Ascending aorta (tissue), 2 donors: ENCODE measurements at regions of chr19 and their contacts with region 1.

Region 1: DNA sequence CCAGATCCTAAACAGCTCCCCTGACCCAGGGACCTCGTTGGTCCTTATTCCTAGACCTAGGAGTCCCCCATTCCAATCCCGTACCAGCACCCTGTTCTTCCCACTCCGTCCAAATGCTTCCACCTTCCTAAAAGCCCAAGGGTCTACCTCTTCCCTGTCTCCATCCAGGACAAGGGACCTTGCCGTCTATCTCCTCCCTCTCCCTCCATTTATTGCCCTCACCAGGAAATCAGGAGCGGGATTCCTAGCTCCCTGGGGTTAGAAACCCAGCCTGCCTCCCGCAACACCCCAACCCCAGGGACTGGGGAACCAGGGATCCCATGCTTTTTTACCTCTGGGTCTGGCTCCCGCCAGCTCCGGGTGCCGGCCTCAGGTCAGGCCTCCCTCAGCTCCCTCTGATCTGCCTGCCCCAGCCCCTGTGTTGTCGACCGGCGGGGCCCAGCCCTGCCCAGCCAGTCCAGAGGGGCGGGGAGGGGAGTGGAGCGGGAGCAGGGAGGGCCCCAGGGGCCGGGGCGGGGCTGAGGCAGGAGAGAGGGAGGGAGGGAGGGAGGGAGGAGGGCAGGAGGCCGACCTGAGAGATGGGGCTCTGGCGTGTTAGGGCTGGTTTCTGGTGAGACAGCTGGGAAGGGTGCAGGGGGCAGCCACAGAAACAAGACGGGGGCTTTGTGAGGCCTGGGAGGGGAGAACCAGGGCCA is at the start of gene B3GNT8:
- DNase-seq: peak; percentile 36 to 91
- H3K4me3 ChIP-seq: peak within 1 kb of the TSS; percentile 48 to 80
- H3K27ac ChIP-seq: peak within 1 kb of the TSS; percentile 79 to 89
- H3K4me1 ChIP-seq: peaks cover 9 to 21% of the 10 kb centered on the region in 2 donors
- H3K27me3 ChIP-seq: no peaks in the 10 kb centered on the region
- CTCF ChIP-seq: no peak
- total RNA-seq, gene B3GNT8: 3.7 TPM

Region 2: GRCh38 chr19:41321600-41322270 is 105.4 kb before region 1 on chr19:
- intact Hi-C with region 1: loop called (anchors 5 kb)
- DNase-seq: no peak
- H3K4me3 ChIP-seq: no peak overlapping the region
- H3K27ac ChIP-seq: peak overlapping the region; percentile 85 to 97
- H3K4me1 ChIP-seq: peaks cover 35 to 52% of the 10 kb centered on the region in 2 donors
- H3K27me3 ChIP-seq: no peaks in the 10 kb centered on the region
- CTCF ChIP-seq: peak; percentile 61 to 70 (median 68)

Region 3: GRCh38 chr19:41439441-41440222 is 12.5 kb after region 1 on chr19 and contains the start of gene DMAC2:
- intact Hi-C with region 1: loop called (anchors 1 kb)
- DNase-seq: peak; percentile 90 to 99
- H3K4me3 ChIP-seq: peak within 1 kb of the TSS; percentile 66 to 78
- H3K27ac ChIP-seq: peak within 1 kb of the TSS; percentile 90 to 92
- H3K4me1 ChIP-seq: no peaks in the 10 kb centered on the region
- H3K27me3 ChIP-seq: no peaks in the 10 kb centered on the region
- CTCF ChIP-seq: peak in 2 of 3 experiments; percentile 51 to 61
- total RNA-seq, gene DMAC2: 21.2 TPM

Region 4: GRCh38 chr19:41449865-41450178 is 22.7 kb after region 1 on chr19:
- intact Hi-C with region 1: no loop called
- DNase-seq: no peak
- H3K4me3 ChIP-seq: no peak overlapping the region
- H3K27ac ChIP-seq: no peak overlapping the region
- H3K4me1 ChIP-seq: peaks cover 0 to 2% of the 10 kb centered on the region in 2 donors
- H3K27me3 ChIP-seq: no peaks in the 10 kb centered on the region
- CTCF ChIP-seq: no peak

Region 5: GRCh38 chr19:41671491-41671890 is 244.4 kb after region 1 on chr19:
- intact Hi-C with region 1: no loop called
- DNase-seq: no peak
- H3K4me3 ChIP-seq: no peak overlapping the region
- H3K27ac ChIP-seq: no peak overlapping the region
- H3K4me1 ChIP-seq: no peaks in the 10 kb centered on the region
- H3K27me3 ChIP-seq: no peaks in the 10 kb centered on the region
- CTCF ChIP-seq: no peak

Region 6: DNA sequence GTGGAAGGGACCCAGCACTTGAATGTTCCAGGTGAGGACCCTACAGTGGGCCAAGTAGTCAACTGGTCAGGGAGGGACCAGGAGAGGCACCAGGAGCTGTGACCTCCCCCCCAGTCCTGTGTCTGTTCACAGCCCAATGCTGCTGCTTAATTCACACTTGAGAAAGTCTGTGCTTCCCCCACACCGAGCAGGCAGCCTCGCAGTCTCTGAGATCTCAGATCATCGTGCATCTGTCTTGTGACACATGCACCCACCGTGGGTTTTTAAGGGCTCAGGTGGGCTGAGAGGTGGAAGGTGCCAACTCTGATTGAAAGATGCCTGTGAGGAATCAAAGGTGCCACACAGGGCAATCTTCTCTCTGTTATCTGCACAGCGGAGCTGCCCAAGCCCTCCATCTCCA is 287.5 kb after region 1 on chr19:
- intact Hi-C with region 1: no loop called
- DNase-seq: no peak
- H3K4me3 ChIP-seq: no peak overlapping the region
- H3K27ac ChIP-seq: no peak overlapping the region
- H3K4me1 ChIP-seq: no peaks in the 10 kb centered on the region
- H3K27me3 ChIP-seq: no peaks in the 10 kb centered on the region
- CTCF ChIP-seq: no peak